ENCODE measurements at regions of chr21 and their contacts with region 1.

Region 1: GRCh38 chr21:42991992-42992740 is 17.8 kb downstream of the PKNOX1 start:
- DNase-seq: no peak
- ATAC-seq: no peak
- H3K4me3 ChIP-seq: no peak overlapping the region
- H3K4me3 Mint-ChIP-seq: no peak overlapping the region
- H3K27ac ChIP-seq: no peak overlapping the region
- H3K27ac Mint-ChIP-seq: peak overlapping the region; percentile 64
- H3K4me1 ChIP-seq: peaks cover 6% of the 10 kb centered on the region
- H3K4me1 Mint-ChIP-seq: peaks cover 14% of the 10 kb centered on the region
- H3K27me3 ChIP-seq: no peaks in the 10 kb centered on the region
- H3K27me3 Mint-ChIP-seq: no peaks in the 10 kb centered on the region
- CTCF ChIP-seq: no peak

Region 2: DNA sequence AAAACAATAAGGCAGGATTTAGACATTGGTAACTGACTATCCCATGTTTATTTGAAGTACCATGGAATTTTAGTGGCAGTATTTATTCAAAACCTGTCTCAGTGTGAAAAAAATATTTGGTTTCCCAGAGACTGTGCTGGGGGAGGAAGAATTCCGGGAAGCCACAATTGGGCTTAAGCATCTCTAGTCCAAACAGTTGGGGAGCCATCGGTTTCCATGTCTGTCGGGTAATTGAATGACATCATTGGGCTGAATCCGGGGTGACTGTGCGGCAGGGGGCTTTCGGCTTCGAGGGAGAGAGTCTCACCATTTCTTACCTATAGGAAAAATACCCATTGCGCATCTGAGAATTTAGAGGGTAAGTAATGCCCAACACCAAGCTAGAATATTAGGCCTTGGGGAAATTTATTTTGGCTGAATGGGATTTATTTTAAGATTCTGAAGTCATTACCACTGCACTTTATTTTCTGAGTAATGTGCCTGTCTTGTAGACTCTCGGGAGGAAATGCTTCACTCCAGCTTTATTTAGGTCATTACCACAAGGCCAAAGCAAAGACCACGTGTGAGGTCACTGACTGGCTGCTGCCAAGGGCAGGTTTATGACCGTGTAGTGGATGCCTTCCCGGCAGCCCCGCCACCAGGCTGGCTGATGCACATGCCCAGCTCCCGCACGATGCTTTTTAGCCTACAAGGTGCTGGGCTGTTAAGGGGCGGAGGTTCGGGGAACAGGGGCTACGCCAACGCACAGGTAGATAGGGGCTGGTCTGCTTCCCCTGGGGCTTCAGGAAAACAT is 944.1 kb before region 1 on chr21:
- CTCF ChIA-PET with region 1: no interaction called
- POLR2A ChIA-PET with region 1: no interaction called
- intact Hi-C with region 1: loop called in 1 of 2 experiments (anchors 10 kb)
- DNase-seq: no peak
- ATAC-seq: no peak
- H3K4me3 ChIP-seq: no peak overlapping the region
- H3K4me3 Mint-ChIP-seq: no peak overlapping the region
- H3K27ac ChIP-seq: no peak overlapping the region
- H3K27ac Mint-ChIP-seq: no peak overlapping the region
- H3K4me1 ChIP-seq: peaks cover 4% of the 10 kb centered on the region
- H3K4me1 Mint-ChIP-seq: peaks cover 9% of the 10 kb centered on the region
- H3K27me3 ChIP-seq: no peaks in the 10 kb centered on the region
- H3K27me3 Mint-ChIP-seq: no peaks in the 10 kb centered on the region
- CTCF ChIP-seq: no peak

Region 3: GRCh38 chr21:42956819-42957632 is 35.1 kb before region 1 on chr21:
- CTCF ChIA-PET with region 1: no interaction called
- POLR2A ChIA-PET with region 1: no interaction called
- intact Hi-C with region 1: loop called in 1 of 2 experiments (anchors 5 kb)
- DNase-seq: no peak
- ATAC-seq: peak; percentile 56
- H3K4me3 ChIP-seq: no peak overlapping the region
- H3K4me3 Mint-ChIP-seq: no peak overlapping the region
- H3K27ac ChIP-seq: no peak overlapping the region
- H3K27ac Mint-ChIP-seq: no peak overlapping the region
- H3K4me1 ChIP-seq: no peaks in the 10 kb centered on the region
- H3K4me1 Mint-ChIP-seq: peaks cover 3% of the 10 kb centered on the region
- H3K27me3 ChIP-seq: no peaks in the 10 kb centered on the region
- H3K27me3 Mint-ChIP-seq: no peaks in the 10 kb centered on the region
- CTCF ChIP-seq: no peak

Measured in CD8-positive, alpha-beta T cell (primary cell).